Activated naive CD8-positive, alpha-beta T cell treated with anti-CD3 and anti-CD28 coated beads, Interleukin-2, amount 10 ng/mL, durations not matched to agents 7 days and 5 days (primary cell): ENCODE measurements at regions of chr15 and their contacts with region 1.

Region 1: GRCh38 chr15:65818927-65819562 is 27.0 kb upstream of the DENND4A start:
- DNase-seq: no peak
- ATAC-seq: peak; percentile 85
- H3K4me3 Mint-ChIP-seq: peak overlapping the region; percentile 66
- H3K27ac Mint-ChIP-seq: peak overlapping the region; percentile 85
- H3K4me1 Mint-ChIP-seq: peaks cover 43% of the 10 kb centered on the region
- H3K27me3 Mint-ChIP-seq: no peaks in the 10 kb centered on the region

Region 2: GRCh38 chr15:65695081-65695480 is 124.0 kb before region 1 on chr15:
- POLR2A ChIA-PET with region 1: no interaction called
- DNase-seq: no peak
- ATAC-seq: no peak
- H3K4me3 Mint-ChIP-seq: no peak overlapping the region
- H3K27ac Mint-ChIP-seq: no peak overlapping the region
- H3K4me1 Mint-ChIP-seq: no peaks in the 10 kb centered on the region
- H3K27me3 Mint-ChIP-seq: no peaks in the 10 kb centered on the region

Region 3: GRCh38 chr15:65804252-65804931 is 14.7 kb before region 1 on chr15:
- POLR2A ChIA-PET with region 1: interaction called, 40 read pairs
- DNase-seq: no peak
- ATAC-seq: no peak
- H3K4me3 Mint-ChIP-seq: no peak overlapping the region
- H3K27ac Mint-ChIP-seq: no peak overlapping the region
- H3K4me1 Mint-ChIP-seq: peaks cover 19% of the 10 kb centered on the region
- H3K27me3 Mint-ChIP-seq: no peaks in the 10 kb centered on the region

Region 4: GRCh38 chr15:65832549-65833364 is 13.7 kb after region 1 on chr15:
- POLR2A ChIA-PET with region 1: interaction called, 24 read pairs
- DNase-seq: peak; percentile 68
- ATAC-seq: peak; percentile 66
- H3K4me3 Mint-ChIP-seq: peak overlapping the region; percentile 84
- H3K27ac Mint-ChIP-seq: peak overlapping the region; percentile 94
- H3K4me1 Mint-ChIP-seq: peaks cover 46% of the 10 kb centered on the region
- H3K27me3 Mint-ChIP-seq: no peaks in the 10 kb centered on the region